K562 (cell line): ENCODE measurements at regions of chr10 and their contacts with region 1.

Region 1: GRCh38 chr10:96513698-96514561 is at the start of gene TLL2:
- DNase-seq: peak; percentile 69 to 86 (median 81)
- ATAC-seq: peak; percentile 92
- H3K4me3 ChIP-seq: peak within 1 kb of the TSS; percentile 31
- H3K27ac ChIP-seq: no peak within 1 kb of the TSS
- H3K4me1 ChIP-seq: peaks cover 4 to 21% of the 10 kb centered on the region in 2 experiments; a peak in 4 of 5 replicates
- H3K27me3 ChIP-seq: peaks cover 0 to 30% of the 10 kb centered on the region in 2 experiments; a peak in 3 of 5 replicates
- CTCF ChIP-seq: peak; percentile 35 to 71 (median 49)
- EP300 ChIP-seq: no peak
- POLR2A ChIP-seq: no peak
- RAD21 ChIP-seq: peak; percentile 17 to 41; a peak in 2 of 4 replicates
- polyA plus RNA-seq, gene TLL2: not detected

Region 2: GRCh38 chr10:96395931-96396877 is 117.7 kb before region 1 on chr10:
- CTCF ChIA-PET with region 1: interaction called, 3 read pairs
- POLR2A ChIA-PET with region 1: no interaction called
- in situ Hi-C with region 1: no loop called
- intact Hi-C with region 1: loop called (anchors 5 kb)
- DNase-seq: peak; percentile 70 to 76 (median 74)
- ATAC-seq: peak; percentile 95
- H3K4me3 ChIP-seq: no peak overlapping the region
- H3K27ac ChIP-seq: no peak overlapping the region
- H3K4me1 ChIP-seq: no peaks in the 10 kb centered on the region
- H3K27me3 ChIP-seq: peaks cover 10 to 28% of the 10 kb centered on the region in 2 experiments; a peak in 3 of 5 replicates
- CTCF ChIP-seq: peak; percentile 69 to 82 (median 80)
- EP300 ChIP-seq: no peak
- POLR2A ChIP-seq: no peak
- RAD21 ChIP-seq: peak; percentile 54 to 70

Region 3: GRCh38 chr10:96614515-96614914 is 100.6 kb after region 1 on chr10:
- CTCF ChIA-PET with region 1: no interaction called
- POLR2A ChIA-PET with region 1: no interaction called
- in situ Hi-C with region 1: no loop called
- intact Hi-C with region 1: loop called (anchors 10 kb)
- DNase-seq: peak; percentile 19 to 79 (median 44)
- ATAC-seq: peak; percentile 15; the same call in 2 of the 3 replicates
- H3K4me3 ChIP-seq: no peak overlapping the region
- H3K27ac ChIP-seq: no peak overlapping the region; the same call in 2 of the 3 replicates
- H3K4me1 ChIP-seq: peaks cover 22 to 34% of the 10 kb centered on the region in 2 experiments; a peak in 4 of 5 replicates
- H3K27me3 ChIP-seq: no peaks in the 10 kb centered on the region
- CTCF ChIP-seq: no peak
- EP300 ChIP-seq: no peak
- POLR2A ChIP-seq: no peak
- RAD21 ChIP-seq: no peak

Region 4: DNA sequence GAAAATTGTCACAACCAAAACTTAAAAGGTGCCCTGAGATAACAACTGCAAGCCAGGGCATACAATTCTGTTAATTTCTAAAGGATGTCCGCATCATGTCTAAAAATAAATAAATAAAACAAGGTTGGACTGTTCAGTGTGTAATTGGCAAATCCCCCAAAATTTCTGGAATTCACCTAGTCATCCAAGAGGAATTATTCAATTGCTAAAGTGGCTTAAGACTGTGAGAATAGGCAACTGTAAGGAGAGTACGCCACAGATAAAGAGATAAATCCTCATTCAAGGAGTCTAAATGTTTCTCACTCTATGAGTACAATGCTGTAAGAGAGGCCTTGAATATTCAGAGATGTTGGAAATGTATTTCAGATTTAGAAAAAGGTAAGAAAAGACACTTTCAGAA is 169.1 kb after region 1 on chr10:
- CTCF ChIA-PET with region 1: no interaction called
- POLR2A ChIA-PET with region 1: no interaction called
- in situ Hi-C with region 1: no loop called
- intact Hi-C with region 1: no loop called
- DNase-seq: no peak
- ATAC-seq: no peak
- H3K4me3 ChIP-seq: no peak overlapping the region
- H3K27ac ChIP-seq: no peak overlapping the region
- H3K4me1 ChIP-seq: peaks cover 0 to 12% of the 10 kb centered on the region in 2 experiments; a peak in 3 of 5 replicates
- H3K27me3 ChIP-seq: no peaks in the 10 kb centered on the region
- CTCF ChIP-seq: no peak
- EP300 ChIP-seq: no peak
- POLR2A ChIP-seq: no peak
- RAD21 ChIP-seq: no peak